Calu3 (cell line): ENCODE measurements at regions of chr12 and their contacts with region 1.

Region 1: DNA sequence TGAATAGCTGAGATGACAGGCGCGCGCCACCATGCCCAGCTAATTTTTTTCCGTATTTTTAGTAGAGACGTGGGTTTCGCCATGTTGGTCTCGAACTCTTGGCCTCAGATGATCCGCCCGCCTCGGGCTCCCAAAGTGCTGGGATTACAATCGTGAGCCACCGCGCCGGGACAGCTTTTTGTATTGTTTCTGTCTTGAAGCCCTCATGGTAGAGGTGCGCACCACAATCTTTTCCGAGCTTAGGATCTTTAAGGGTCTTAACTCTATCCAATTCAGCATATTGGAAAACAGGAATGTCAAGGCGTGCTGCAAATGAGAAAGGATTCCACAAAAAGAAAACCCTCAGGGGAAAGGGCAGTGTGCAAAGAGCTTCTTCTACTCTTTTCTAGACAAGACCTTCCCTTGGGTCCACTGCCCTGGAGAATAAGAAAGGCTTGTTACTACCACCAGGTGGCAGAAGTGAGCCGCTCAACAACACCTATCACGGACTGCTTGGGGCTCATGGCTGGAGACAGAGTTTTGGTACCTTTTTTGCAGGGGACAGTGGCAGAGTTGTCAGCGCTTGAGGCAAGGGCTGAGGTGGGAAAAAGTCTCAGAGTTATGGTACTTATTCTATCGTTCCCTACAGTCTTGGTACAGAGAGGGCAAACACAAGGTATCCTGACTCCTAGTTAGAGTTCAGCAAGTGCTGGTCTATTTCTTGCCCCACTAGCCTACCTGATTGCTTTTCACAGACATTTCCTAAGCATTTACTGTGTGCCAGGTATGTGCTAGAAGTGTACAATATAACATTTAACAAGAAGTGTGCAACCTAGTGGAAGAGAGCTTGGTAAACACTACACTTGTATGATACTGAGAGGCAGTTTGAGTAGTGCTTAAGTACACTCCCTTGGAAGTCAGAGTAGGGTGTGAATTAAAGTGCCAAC is 16.4 kb upstream of the SP7 start:
- DNase-seq: peak; percentile 76
- H3K4me3 Mint-ChIP-seq: no peak overlapping the region
- H3K27ac Mint-ChIP-seq: no peak overlapping the region
- H3K4me1 Mint-ChIP-seq: peaks cover 9% of the 10 kb centered on the region
- H3K27me3 Mint-ChIP-seq: no peaks in the 10 kb centered on the region
- CTCF ChIP-seq: peak; percentile 49

Region 2: GRCh38 chr12:53379389-53380103 is 27.0 kb after region 1 on chr12:
- CTCF ChIA-PET with region 1: interaction called, 19 read pairs
- intact Hi-C with region 1: loop called (anchors 2 kb)
- DNase-seq: peak; percentile 95
- H3K4me3 Mint-ChIP-seq: no peak overlapping the region
- H3K27ac Mint-ChIP-seq: no peak overlapping the region
- H3K4me1 Mint-ChIP-seq: peaks cover 15% of the 10 kb centered on the region
- H3K27me3 Mint-ChIP-seq: no peaks in the 10 kb centered on the region
- CTCF ChIP-seq: no peak

Region 3: GRCh38 chr12:53419761-53420160 is 67.2 kb after region 1 on chr12:
- CTCF ChIA-PET with region 1: interaction called, 46 read pairs
- intact Hi-C with region 1: loop called (anchors 1 kb)
- DNase-seq: no peak
- H3K4me3 Mint-ChIP-seq: no peak overlapping the region
- H3K27ac Mint-ChIP-seq: no peak overlapping the region
- H3K4me1 Mint-ChIP-seq: peaks cover 19% of the 10 kb centered on the region
- H3K27me3 Mint-ChIP-seq: no peaks in the 10 kb centered on the region
- CTCF ChIP-seq: no peak